CD8-positive, alpha-beta memory T cell (primary cell): ENCODE measurements at regions of chr12 and their contacts with region 1.

Region 1: GRCh38 chr12:9707864-9708808 is 24.8 kb downstream of the CLECL1 start:
- DNase-seq: peak; percentile 48 to 80 (median 66)
- H3K4me3 ChIP-seq: peak overlapping the region; percentile 18
- H3K4me3 Mint-ChIP-seq: peak overlapping the region; percentile 38 to 83 (median 73)
- H3K27ac ChIP-seq: no peak overlapping the region
- H3K27ac Mint-ChIP-seq: peak overlapping the region; percentile 75 to 95 (median 92)
- H3K4me1 ChIP-seq: peaks cover 41% of the 10 kb centered on the region
- H3K4me1 Mint-ChIP-seq: peaks cover 56 to 74% (median 63%) of the 10 kb centered on the region in 3 donors
- H3K27me3 ChIP-seq: no peaks in the 10 kb centered on the region
- H3K27me3 Mint-ChIP-seq: no peaks in the 10 kb centered on the region

Region 2: DNA sequence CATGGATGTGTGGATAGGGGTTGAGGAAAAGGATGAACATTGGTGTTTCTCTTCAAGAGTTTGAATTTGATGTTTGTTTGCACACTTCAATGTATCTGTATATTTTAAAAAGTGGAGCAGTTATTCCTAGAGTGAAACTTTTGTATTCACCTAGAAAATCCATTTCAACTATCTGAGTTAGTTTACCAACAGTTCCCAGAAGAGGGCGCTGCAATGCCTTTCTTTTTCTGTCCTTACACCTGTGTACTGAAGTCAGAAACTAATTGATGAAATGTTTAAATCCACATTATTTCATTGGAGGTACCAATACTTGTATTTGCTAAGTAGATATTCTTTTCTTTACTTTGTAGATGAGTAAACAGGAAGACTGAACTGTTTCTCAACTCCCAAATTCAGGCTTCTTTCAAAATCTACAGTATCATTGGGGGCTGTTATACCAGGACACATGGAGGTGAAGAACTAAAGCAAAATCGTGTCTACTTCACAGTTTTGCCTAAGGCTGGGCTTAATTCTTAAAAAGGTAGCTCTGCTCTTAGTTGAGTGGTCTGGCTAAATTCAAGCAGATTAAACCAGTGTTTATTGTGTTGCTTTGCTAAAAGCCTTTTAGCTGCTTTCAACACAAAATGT is 73.8 kb before region 1 on chr12:
- CTCF ChIA-PET with region 1: interaction called, 80 read pairs
- POLR2A ChIA-PET with region 1: interaction called, 3 read pairs
- DNase-seq: peak; percentile 64 to 80 (median 68)
- H3K4me3 ChIP-seq: peak overlapping the region; percentile 1
- H3K4me3 Mint-ChIP-seq: peak overlapping the region in 5 of 7 donors; percentile 18 to 63 (median 43)
- H3K27ac ChIP-seq: no peak overlapping the region
- H3K27ac Mint-ChIP-seq: peak overlapping the region; percentile 11 to 93 (median 88)
- H3K4me1 ChIP-seq: peaks cover 57% of the 10 kb centered on the region
- H3K4me1 Mint-ChIP-seq: peaks cover 44 to 83% (median 79%) of the 10 kb centered on the region in 3 donors
- H3K27me3 ChIP-seq: no peaks in the 10 kb centered on the region
- H3K27me3 Mint-ChIP-seq: peaks cover 0 to 2% of the 10 kb centered on the region in 2 donors

Region 3: GRCh38 chr12:9667403-9668160 is 40.6 kb before region 1 on chr12:
- CTCF ChIA-PET with region 1: interaction called, 18 read pairs
- POLR2A ChIA-PET with region 1: interaction called, 6 read pairs
- DNase-seq: no peak
- H3K4me3 ChIP-seq: peak overlapping the region; percentile 66
- H3K4me3 Mint-ChIP-seq: peak overlapping the region; percentile 72 to 98 (median 92)
- H3K27ac ChIP-seq: peak overlapping the region; percentile 34
- H3K27ac Mint-ChIP-seq: peak overlapping the region; percentile 80 to 97 (median 94)
- H3K4me1 ChIP-seq: peaks cover 65% of the 10 kb centered on the region
- H3K4me1 Mint-ChIP-seq: peaks cover 63 to 85% (median 70%) of the 10 kb centered on the region in 3 donors
- H3K27me3 ChIP-seq: no peaks in the 10 kb centered on the region
- H3K27me3 Mint-ChIP-seq: no peaks in the 10 kb centered on the region

Region 4: GRCh38 chr12:9673404-9674225 is 34.5 kb before region 1 on chr12:
- CTCF ChIA-PET with region 1: interaction called, 18 read pairs
- POLR2A ChIA-PET with region 1: interaction called, 6 read pairs
- DNase-seq: peak; percentile 42 to 79 (median 55)
- H3K4me3 ChIP-seq: peak overlapping the region; percentile 66
- H3K4me3 Mint-ChIP-seq: peak overlapping the region; percentile 86 to 98 (median 92)
- H3K27ac ChIP-seq: peak overlapping the region; percentile 52
- H3K27ac Mint-ChIP-seq: peak overlapping the region; percentile 82 to 97 (median 94)
- H3K4me1 ChIP-seq: peaks cover 52% of the 10 kb centered on the region
- H3K4me1 Mint-ChIP-seq: peaks cover 66 to 88% (median 69%) of the 10 kb centered on the region in 3 donors
- H3K27me3 ChIP-seq: no peaks in the 10 kb centered on the region
- H3K27me3 Mint-ChIP-seq: peaks cover 0 to 1% of the 10 kb centered on the region in 2 donors

Region 5: GRCh38 chr12:9687228-9687627 is 20.9 kb before region 1 on chr12:
- CTCF ChIA-PET with region 1: interaction called, 12 read pairs
- POLR2A ChIA-PET with region 1: interaction called, 4 read pairs
- DNase-seq: no peak
- H3K4me3 ChIP-seq: no peak overlapping the region
- H3K4me3 Mint-ChIP-seq: peak overlapping the region in 6 of 7 donors; percentile 3 to 73 (median 52)
- H3K27ac ChIP-seq: no peak overlapping the region
- H3K27ac Mint-ChIP-seq: peak overlapping the region in 7 of 8 donors; percentile 68 to 96 (median 74)
- H3K4me1 ChIP-seq: peaks cover 48% of the 10 kb centered on the region
- H3K4me1 Mint-ChIP-seq: peaks cover 64 to 89% (median 84%) of the 10 kb centered on the region in 3 donors
- H3K27me3 ChIP-seq: no peaks in the 10 kb centered on the region
- H3K27me3 Mint-ChIP-seq: peaks cover 0 to 1% of the 10 kb centered on the region in 2 donors

Region 6: DNA sequence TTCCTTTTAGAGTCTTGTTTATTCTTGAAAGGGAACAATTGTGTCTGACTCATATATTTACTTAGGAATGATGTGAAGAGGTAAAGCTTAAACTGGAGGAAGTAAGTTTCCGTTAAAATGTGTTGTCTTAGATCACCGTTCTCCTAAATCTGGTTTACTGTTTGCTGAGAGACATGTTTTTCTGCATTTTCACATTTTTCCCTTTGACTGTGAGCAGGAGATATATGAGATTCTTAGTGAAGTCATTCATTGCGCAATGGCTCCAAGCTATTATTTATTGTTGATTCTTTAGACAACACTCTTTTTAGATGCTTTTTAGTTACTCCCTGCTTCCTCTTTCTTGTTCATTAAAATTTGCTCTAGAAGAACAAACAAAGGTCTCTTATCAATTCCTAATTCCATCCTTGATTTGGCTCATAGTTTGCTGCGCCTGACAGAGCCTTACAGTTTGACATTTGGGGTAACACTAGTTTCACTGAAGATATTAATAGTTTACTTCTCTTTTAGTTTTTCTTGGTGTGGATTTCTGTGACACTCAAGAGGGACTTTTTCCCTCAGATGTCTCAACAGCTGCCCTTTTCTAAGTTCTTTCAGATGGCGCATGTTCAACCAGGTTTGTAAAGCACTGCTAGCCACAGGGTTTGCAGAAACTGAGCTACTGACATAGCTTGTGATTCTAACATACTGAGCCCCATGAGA is 13.4 kb after region 1 on chr12:
- CTCF ChIA-PET with region 1: interaction called, 12 read pairs
- POLR2A ChIA-PET with region 1: interaction called, 3 read pairs
- DNase-seq: no peak
- H3K4me3 ChIP-seq: no peak overlapping the region
- H3K4me3 Mint-ChIP-seq: no peak overlapping the region
- H3K27ac ChIP-seq: no peak overlapping the region
- H3K27ac Mint-ChIP-seq: no peak overlapping the region
- H3K4me1 ChIP-seq: no peaks in the 10 kb centered on the region
- H3K4me1 Mint-ChIP-seq: peaks cover 0 to 5% (median 4%) of the 10 kb centered on the region in 3 donors
- H3K27me3 ChIP-seq: no peaks in the 10 kb centered on the region
- H3K27me3 Mint-ChIP-seq: peaks cover 3 to 16% of the 10 kb centered on the region in 2 donors

Region 7: DNA sequence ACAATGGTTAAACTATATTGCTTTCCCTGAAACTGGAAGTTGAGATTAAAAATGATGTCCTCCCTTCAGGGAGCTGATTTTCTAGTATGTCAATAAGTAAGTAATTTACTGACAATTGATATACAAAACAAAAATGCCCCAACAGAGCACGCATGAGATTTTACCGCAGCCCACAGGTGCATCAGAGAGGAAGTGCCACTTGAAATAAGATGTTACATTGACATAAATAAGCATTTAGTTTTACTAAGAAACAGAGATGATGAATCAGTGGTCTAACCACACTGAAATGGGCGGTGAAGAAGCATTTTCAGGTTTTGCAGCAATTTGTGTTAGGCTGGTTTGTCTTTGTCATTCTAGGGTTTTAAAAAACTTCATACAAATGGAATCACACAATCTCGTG is 33.6 kb after region 1 on chr12:
- CTCF ChIA-PET with region 1: interaction called, 31 read pairs
- POLR2A ChIA-PET with region 1: interaction called, 5 read pairs
- DNase-seq: peak; percentile 50 to 90 (median 89)
- H3K4me3 ChIP-seq: peak overlapping the region; percentile 33
- H3K4me3 Mint-ChIP-seq: peak overlapping the region; percentile 33 to 88 (median 82)
- H3K27ac ChIP-seq: peak overlapping the region; percentile 60
- H3K27ac Mint-ChIP-seq: peak overlapping the region; percentile 19 to 99 (median 97)
- H3K4me1 ChIP-seq: peaks cover 62% of the 10 kb centered on the region
- H3K4me1 Mint-ChIP-seq: peaks cover 53 to 80% (median 75%) of the 10 kb centered on the region in 3 donors
- H3K27me3 ChIP-seq: no peaks in the 10 kb centered on the region
- H3K27me3 Mint-ChIP-seq: no peaks in the 10 kb centered on the region

Region 8: DNA sequence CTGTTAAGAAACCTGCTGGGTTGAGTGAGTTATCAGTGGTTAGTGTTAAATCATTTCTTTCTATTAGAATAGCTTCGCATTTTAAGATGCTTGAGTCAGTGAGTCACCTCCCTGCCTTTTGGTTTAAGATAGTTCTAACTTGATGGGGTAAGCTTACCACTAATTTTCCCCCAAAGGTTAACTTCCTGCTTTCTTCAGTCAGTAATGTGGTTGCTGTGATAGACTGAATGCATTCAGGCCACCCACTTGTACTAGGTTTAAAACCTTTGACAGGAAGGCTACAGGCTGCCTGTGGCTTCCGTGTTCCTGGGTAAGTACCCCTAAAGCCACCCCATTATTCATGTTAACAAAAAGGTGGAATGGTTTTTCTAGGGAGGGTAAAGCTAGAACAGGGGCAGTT is 198.7 kb after region 1 on chr12:
- CTCF ChIA-PET with region 1: no interaction called
- POLR2A ChIA-PET with region 1: no interaction called
- DNase-seq: peak; percentile 6 to 75 (median 67)
- H3K4me3 ChIP-seq: peak overlapping the region; percentile 30
- H3K4me3 Mint-ChIP-seq: peak overlapping the region in 6 of 7 donors; percentile 17 to 67 (median 34)
- H3K27ac ChIP-seq: no peak overlapping the region
- H3K27ac Mint-ChIP-seq: peak overlapping the region; percentile 35 to 90 (median 76)
- H3K4me1 ChIP-seq: peaks cover 25% of the 10 kb centered on the region
- H3K4me1 Mint-ChIP-seq: peaks cover 30 to 45% (median 40%) of the 10 kb centered on the region in 3 donors
- H3K27me3 ChIP-seq: no peaks in the 10 kb centered on the region
- H3K27me3 Mint-ChIP-seq: peaks cover 0 to 1% of the 10 kb centered on the region in 2 donors